Caco-2 (cell line): ENCODE measurements at regions of chr14 and their contacts with region 1.

Region 1: DNA sequence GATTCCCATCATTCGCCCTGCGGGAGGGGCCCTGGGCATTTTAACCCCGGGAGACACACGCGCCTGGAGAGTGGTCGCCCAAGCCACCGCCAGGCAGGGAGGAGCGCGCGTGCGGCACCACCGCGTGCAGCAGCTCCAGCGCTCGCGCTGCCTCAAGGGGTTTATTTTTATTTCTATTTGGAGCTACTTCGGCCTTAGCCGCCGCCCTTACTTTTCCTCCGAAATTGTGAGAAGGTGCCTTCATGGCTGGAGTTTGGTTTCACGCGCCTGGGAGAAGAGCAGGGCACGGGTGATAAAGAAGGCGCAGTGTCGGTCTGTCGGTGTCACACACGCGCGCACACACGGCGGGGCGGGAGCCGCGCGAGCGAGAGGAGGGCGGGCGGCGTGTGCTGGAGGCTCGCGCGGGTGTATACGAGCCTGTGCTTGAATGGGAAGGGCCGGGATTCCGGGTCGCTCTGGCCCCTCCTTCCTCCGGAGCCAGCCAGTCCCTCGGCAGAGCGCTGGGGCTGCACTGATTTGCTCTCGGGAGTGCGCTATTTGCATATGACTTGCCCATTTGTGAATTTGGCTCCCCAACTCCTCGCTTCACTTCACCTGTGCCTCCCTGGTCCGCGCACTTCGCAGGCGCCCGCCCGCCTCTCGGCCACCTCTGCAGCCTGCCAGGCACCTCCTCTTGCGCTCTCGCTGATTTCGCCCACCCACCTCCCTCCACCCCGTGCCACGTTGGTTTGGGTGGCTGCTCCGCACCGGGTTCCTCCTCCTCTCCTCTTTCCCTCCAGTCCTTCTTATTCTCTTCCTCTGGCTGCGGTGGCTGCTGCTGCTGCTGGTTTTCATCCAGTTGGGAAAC is 932.3 kb downstream of the DIO2 start:
- DNase-seq: peak; percentile 93 to 95
- H3K4me3 ChIP-seq: peak overlapping the region; percentile 75
- H3K4me3 Mint-ChIP-seq: peak overlapping the region; percentile 95
- H3K27ac Mint-ChIP-seq: peak overlapping the region; percentile 78
- H3K4me1 ChIP-seq: peaks cover 11% of the 10 kb centered on the region
- H3K4me1 Mint-ChIP-seq: peaks cover 28% of the 10 kb centered on the region
- H3K27me3 ChIP-seq: no peaks in the 10 kb centered on the region
- H3K27me3 Mint-ChIP-seq: peaks cover 4% of the 10 kb centered on the region
- CTCF ChIP-seq: no peak

Region 2: GRCh38 chr14:79299161-79299560 is 20.1 kb after region 1 on chr14:
- CTCF ChIA-PET with region 1: no interaction called
- POLR2A ChIA-PET with region 1: no interaction called
- intact Hi-C with region 1: loop called (anchors 2 kb)
- DNase-seq: peak in 1 of 2 experiments; percentile 50
- H3K4me3 ChIP-seq: no peak overlapping the region
- H3K4me3 Mint-ChIP-seq: no peak overlapping the region
- H3K27ac Mint-ChIP-seq: peak overlapping the region; percentile 78
- H3K4me1 ChIP-seq: peaks cover 47% of the 10 kb centered on the region
- H3K4me1 Mint-ChIP-seq: peaks cover 25% of the 10 kb centered on the region
- H3K27me3 ChIP-seq: no peaks in the 10 kb centered on the region
- H3K27me3 Mint-ChIP-seq: no peaks in the 10 kb centered on the region
- CTCF ChIP-seq: no peak

Region 3: DNA sequence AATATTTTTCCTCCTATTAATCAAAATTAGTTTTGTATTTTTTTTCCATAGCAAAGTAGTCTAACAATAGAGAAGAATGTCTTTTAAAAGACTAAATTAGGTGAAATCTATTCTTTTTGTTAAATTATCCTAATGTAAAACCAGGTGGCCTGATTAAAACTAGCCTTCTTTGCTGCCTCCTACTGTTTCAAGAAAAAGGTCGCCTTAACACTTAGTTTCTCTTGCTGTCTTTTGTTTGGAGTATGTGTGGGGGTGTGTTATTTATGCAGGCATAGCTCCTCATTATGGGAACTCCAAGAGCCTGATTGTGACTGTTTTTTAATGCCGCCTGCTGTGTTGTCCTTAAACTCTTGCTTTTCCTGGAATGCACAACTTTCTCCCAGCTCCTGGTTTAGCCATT is 77.0 kb after region 1 on chr14:
- CTCF ChIA-PET with region 1: no interaction called
- POLR2A ChIA-PET with region 1: no interaction called
- intact Hi-C with region 1: loop called (anchors 2 kb)
- DNase-seq: no peak
- H3K4me3 ChIP-seq: no peak overlapping the region
- H3K4me3 Mint-ChIP-seq: no peak overlapping the region
- H3K27ac Mint-ChIP-seq: no peak overlapping the region
- H3K4me1 ChIP-seq: peaks cover 39% of the 10 kb centered on the region
- H3K4me1 Mint-ChIP-seq: peaks cover 26% of the 10 kb centered on the region
- H3K27me3 ChIP-seq: no peaks in the 10 kb centered on the region
- H3K27me3 Mint-ChIP-seq: no peaks in the 10 kb centered on the region
- CTCF ChIP-seq: peak in 1 of 2 experiments; percentile 8